Mucosa of descending colon (tissue), 3 donors: ENCODE measurements at regions of chr1 and their contacts with region 1.

Region 1: GRCh38 chr1:84763912-84764663 is 73.8 kb upstream of the SSX2IP start:
- DNase-seq: no peak
- ATAC-seq: no peak
- H3K4me3 ChIP-seq: no peak overlapping the region
- H3K4me1 ChIP-seq: no peaks in the 10 kb centered on the region
- CTCF ChIP-seq: no peak

Region 2: GRCh38 chr1:84936116-84936810 is 172.2 kb after region 1 on chr1:
- intact Hi-C with region 1: loop called in 1 of 2 experiments (anchors 10 kb)
- DNase-seq: peak in 1 of 3 donors; percentile 19
- ATAC-seq: peak; percentile 87
- H3K4me3 ChIP-seq: no peak overlapping the region
- H3K4me1 ChIP-seq: no peaks in the 10 kb centered on the region
- CTCF ChIP-seq: peak; percentile 78